Dendritic cell treated with granulocyte-macrophage colony-stimulating factor and Interleukin-4, amounts not matched to agents 40 ng/mL and 50 ng/mL, for 4 days (primary cell): ENCODE measurements at regions of chr6 and their contacts with region 1.

Region 1: GRCh38 chr6:53794720-53795253 is at the start of gene LRRC1:
- H3K4me3 Mint-ChIP-seq: peak within 1 kb of the TSS; percentile 99
- H3K27ac Mint-ChIP-seq: peak within 1 kb of the TSS; percentile 81
- H3K4me1 Mint-ChIP-seq: peaks cover 39% of the 10 kb centered on the region
- H3K27me3 Mint-ChIP-seq: peaks cover 40% of the 10 kb centered on the region

Region 2: GRCh38 chr6:53544470-53545308 is 250.1 kb before region 1 on chr6 and contains the start of gene GCLC:
- intact Hi-C with region 1: loop called (anchors 5 kb)
- H3K4me3 Mint-ChIP-seq: peak within 1 kb of the TSS; percentile 89
- H3K27ac Mint-ChIP-seq: peak within 1 kb of the TSS; percentile 81
- H3K4me1 Mint-ChIP-seq: peaks cover 72% of the 10 kb centered on the region
- H3K27me3 Mint-ChIP-seq: peaks cover 6% of the 10 kb centered on the region

Region 3: DNA sequence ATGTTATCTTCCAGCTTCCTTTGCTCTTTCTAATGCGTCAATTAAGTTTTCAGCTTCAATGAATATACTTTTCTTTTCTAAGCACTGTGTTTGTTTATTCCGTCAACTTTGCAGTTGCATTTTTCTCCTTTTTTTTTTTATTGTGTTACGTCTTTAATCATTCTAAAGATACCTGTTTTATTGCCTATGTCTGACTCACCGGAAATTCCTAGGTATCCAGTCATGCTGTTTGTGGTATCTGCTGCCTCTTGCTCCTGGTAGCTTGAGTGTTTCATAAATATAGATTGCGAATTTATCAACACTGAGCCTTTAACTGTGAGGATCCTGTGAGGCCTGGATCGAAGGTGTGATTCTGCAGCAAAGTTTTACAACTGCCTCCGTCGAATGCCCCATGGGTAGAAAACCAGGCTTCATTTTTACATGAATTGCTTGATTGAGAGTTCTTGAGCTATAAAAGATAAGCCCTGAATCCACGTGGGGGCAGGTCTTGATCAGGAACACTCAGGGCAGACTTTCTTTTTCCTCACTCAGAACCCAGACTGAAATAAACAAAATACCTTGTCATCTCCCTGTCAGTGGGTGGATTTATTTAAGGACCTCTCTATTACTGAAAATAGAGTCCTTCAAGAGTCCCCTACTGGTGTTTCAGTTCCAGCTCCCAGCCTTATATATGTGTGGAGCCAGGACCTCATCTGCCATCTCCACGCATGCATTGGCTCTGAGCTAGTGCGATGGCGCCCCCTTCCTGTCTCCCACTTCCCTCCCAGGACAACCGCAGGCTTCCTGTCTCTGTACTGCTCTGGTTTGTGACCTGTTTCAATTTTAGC is 60.1 kb before region 1 on chr6:
- intact Hi-C with region 1: loop called (anchors 5 kb)
- H3K4me3 Mint-ChIP-seq: no peak overlapping the region
- H3K27ac Mint-ChIP-seq: peak overlapping the region; percentile 11
- H3K4me1 Mint-ChIP-seq: peaks cover 45% of the 10 kb centered on the region
- H3K27me3 Mint-ChIP-seq: no peaks in the 10 kb centered on the region